GM13977 (cell line): ENCODE measurements at regions of chr3 and their contacts with region 1.

Region 1: GRCh38 chr3:152574461-152575079 is 260.4 kb upstream of the P2RY1 start:
- DNase-seq: no peak
- CTCF ChIP-seq: peak; percentile 61

Region 2: DNA sequence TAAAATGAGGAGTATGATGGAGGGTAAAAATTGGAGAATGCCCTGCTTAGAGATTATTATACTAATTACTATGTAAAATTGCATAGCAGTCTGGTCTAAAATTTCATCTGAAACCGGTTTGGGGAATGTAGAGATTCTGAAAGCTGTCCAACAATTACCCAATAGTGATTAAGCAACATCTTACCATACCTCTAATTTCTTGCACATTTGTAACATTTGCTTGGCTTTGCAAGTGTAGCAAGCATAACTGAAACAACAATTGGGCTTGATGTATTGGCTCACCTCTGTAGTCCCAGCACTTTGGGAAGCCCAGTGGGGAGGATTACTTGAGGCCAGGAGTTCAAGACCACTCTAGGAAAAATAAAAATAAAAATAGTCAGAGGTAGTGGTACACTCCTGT is 823.4 kb before region 1 on chr3:
- in situ Hi-C with region 1: no loop called
- DNase-seq: no peak
- CTCF ChIP-seq: no peak

Region 3: GRCh38 chr3:152471814-152472671 is 102.5 kb before region 1 on chr3:
- in situ Hi-C with region 1: loop called (anchors 10 kb)
- DNase-seq: peak; percentile 25
- CTCF ChIP-seq: peak; percentile 69

Region 4: DNA sequence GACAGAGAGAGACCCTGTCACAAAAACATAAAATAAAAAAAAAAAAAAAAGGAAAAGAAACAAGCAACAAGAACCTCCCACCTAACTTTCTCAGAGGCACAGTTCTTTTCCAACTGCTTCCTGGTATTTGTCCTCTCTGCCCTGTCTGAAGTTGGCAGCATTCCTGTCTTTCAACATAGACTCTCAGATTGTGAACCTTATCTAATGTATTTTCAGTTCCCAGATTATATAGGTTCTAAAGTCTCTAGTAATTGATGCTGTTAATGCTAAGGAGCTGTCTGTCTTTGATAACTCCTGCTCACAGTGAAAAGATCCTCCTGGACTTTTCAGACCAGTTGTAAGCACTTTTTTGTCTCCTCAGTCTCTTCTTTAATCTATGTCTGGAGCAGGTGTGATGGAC is 60.8 kb after region 1 on chr3:
- in situ Hi-C with region 1: no loop called
- DNase-seq: no peak
- CTCF ChIP-seq: no peak